ENCODE measurements at regions of chr11 and their contacts with region 1.

Region 1: GRCh38 chr11:117143871-117144476 is at the start of gene PAFAH1B2:
- DNase-seq: peak; percentile 90
- ATAC-seq: peak; percentile 87
- H3K4me3 ChIP-seq: peak within 1 kb of the TSS; percentile 73
- H3K27ac ChIP-seq: peak within 1 kb of the TSS; percentile 87
- H3K4me1 ChIP-seq: peaks cover 2% of the 10 kb centered on the region; the same call in 1 of the 2 replicates
- H3K27me3 ChIP-seq: no peaks in the 10 kb centered on the region
- CTCF ChIP-seq: no peak
- POLR2A ChIP-seq: peak; percentile 87
- RAD21 ChIP-seq: no peak
- total RNA-seq, gene PAFAH1B2: 213 and 280 TPM in 2 replicates

Region 2: DNA sequence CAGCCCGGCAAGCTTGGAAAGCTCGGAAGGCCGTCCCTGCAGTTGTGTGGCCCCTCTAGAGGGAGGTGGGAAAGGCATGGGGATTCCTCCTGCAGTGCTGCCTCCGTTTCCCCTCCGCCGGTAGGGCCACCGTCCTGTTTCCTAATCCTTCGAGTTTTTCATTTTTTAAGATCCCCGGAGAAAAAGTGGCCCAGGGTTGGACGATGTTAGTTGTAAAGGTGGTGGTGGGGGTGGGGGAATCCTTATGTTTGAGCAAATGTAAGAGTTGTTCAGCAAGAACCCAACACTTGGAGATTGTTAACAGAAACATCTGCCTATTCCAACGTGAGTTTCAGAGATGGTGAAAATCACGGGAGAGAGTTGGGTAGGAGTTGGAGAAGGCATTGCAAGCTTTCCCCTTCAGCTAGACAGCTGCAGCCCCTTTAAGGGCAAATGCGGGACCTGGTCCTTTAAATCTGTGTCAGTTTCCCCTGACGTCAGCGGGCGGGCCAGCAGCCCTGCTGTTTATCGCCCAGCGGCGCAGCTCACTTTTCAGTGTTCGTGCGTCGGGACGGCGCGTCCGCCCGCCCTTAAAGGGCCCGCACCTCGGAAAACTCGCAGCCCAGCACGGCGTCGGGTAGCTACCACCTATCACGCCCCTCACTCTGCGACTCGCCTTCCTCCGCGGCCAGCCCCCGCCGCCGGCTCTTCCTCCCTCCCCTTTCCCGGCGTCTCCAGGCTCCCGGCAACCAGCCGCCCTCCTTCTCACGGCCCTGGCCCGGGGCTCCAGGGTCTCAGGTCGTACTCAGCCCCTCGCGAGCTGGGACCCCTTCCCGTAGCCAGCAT is 34.4 kb after region 1 on chr11 and contains the start of gene SIDT2:
- CTCF ChIA-PET with region 1: interaction called, 3 read pairs
- POLR2A ChIA-PET with region 1: interaction called, 14 read pairs
- dilution Hi-C with region 1: no loop called
- in situ Hi-C with region 1: no loop called
- intact Hi-C with region 1: loop called (anchors 1 kb)
- DNase-seq: peak; percentile 92
- ATAC-seq: peak; percentile 92
- H3K4me3 ChIP-seq: peak within 1 kb of the TSS; percentile 87
- H3K27ac ChIP-seq: peak within 1 kb of the TSS; percentile 93
- H3K4me1 ChIP-seq: peaks cover 13% of the 10 kb centered on the region
- H3K27me3 ChIP-seq: no peaks in the 10 kb centered on the region
- CTCF ChIP-seq: no peak
- POLR2A ChIP-seq: peak; percentile 83
- RAD21 ChIP-seq: no peak
- total RNA-seq, gene SIDT2: 6.7 and 7.3 TPM in 2 replicates

Measured in IMR-90 (cell line).